Activated naive CD4-positive, alpha-beta T cell treated with anti-CD3 and anti-CD28 coated beads for 36 hours (primary cell): ENCODE measurements at regions of chr1 and their contacts with region 1.

Region 1: DNA sequence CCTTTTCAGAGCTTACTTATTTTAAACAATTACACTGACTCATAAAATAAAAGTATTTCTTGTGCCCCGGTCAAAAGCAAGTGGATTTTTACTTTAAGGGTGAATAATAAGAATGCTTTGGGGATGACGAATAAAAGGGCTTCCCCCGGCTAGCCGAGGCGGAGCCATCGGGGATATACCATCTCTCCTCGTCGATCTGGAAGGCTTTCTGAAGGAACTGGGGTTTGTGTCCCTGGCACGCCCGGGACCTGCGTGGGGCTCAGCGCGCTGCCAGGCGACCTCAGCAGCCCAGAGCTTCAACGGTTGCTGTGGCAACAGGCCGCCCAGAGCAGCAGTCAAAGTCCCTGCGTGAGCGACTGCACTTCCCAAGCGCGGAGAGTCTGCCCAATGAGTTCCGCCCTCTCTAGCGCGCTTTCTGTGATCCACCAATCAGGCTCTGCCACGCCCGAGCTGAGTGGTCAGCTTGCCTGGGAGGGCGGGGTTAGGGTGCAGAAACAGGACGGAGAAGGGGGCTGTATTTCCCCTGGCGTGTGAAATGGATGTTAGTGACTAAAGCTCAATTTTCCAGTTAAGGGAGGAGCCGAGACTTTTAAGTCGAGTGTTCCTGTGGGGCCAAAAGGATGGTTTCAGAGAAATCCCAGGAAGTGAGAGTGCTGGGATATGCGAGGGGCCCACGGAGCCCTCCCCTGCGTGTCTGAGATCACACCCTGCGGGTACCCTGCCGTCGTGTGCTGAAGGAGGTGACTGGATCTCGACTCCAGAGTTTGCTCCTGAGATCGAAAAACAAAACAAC is 33.0 kb upstream of the MGST3 start:
- DNase-seq: peak; percentile 98
- H3K4me3 Mint-ChIP-seq: peak overlapping the region; percentile 89
- H3K27ac Mint-ChIP-seq: peak overlapping the region; percentile 89
- H3K4me1 Mint-ChIP-seq: peaks cover 21% of the 10 kb centered on the region
- H3K27me3 Mint-ChIP-seq: peaks cover 19% of the 10 kb centered on the region

Region 2: GRCh38 chr1:165114022-165114888 is 483.8 kb before region 1 on chr1:
- CTCF ChIA-PET with region 1: no interaction called
- intact Hi-C with region 1: no loop called
- DNase-seq: peak; percentile 45
- H3K4me3 Mint-ChIP-seq: no peak overlapping the region
- H3K27ac Mint-ChIP-seq: no peak overlapping the region
- H3K4me1 Mint-ChIP-seq: no peaks in the 10 kb centered on the region
- H3K27me3 Mint-ChIP-seq: peaks cover 33% of the 10 kb centered on the region

Region 3: DNA sequence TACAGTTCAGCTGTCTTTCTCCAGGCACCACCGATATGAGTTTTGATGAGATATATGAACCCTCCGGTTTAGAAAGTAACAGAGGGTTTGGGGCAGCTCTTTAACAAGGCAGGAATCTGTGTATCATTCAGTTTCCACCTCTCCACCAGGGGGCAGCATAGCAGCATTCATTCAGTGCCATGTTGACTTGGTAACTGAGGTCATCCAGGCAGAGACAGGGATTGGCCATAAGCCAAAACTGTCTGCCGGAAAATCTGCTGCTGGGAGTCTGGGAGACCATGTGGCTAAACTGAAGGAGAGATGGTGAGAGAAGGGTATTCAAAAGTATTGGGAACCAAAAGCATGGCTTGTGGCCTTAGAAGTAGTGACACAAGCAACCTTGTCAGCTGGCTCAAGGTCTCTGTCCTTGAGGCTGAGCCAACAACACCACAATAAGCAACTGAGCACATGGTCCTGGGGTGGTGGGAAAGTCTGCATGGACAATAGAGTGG is 340.1 kb before region 1 on chr1:
- CTCF ChIA-PET with region 1: no interaction called
- intact Hi-C with region 1: loop called (anchors 5 kb)
- DNase-seq: peak; percentile 65
- H3K4me3 Mint-ChIP-seq: no peak overlapping the region
- H3K27ac Mint-ChIP-seq: no peak overlapping the region
- H3K4me1 Mint-ChIP-seq: no peaks in the 10 kb centered on the region
- H3K27me3 Mint-ChIP-seq: peaks cover 24% of the 10 kb centered on the region

Region 4: GRCh38 chr1:165403835-165404482 is 194.1 kb before region 1 on chr1:
- CTCF ChIA-PET with region 1: interaction called, 35 read pairs
- intact Hi-C with region 1: loop called (anchors 1 kb)
- DNase-seq: peak; percentile 57
- H3K4me3 Mint-ChIP-seq: no peak overlapping the region
- H3K27ac Mint-ChIP-seq: no peak overlapping the region
- H3K4me1 Mint-ChIP-seq: peaks cover 2% of the 10 kb centered on the region
- H3K27me3 Mint-ChIP-seq: peaks cover 17% of the 10 kb centered on the region

Region 5: DNA sequence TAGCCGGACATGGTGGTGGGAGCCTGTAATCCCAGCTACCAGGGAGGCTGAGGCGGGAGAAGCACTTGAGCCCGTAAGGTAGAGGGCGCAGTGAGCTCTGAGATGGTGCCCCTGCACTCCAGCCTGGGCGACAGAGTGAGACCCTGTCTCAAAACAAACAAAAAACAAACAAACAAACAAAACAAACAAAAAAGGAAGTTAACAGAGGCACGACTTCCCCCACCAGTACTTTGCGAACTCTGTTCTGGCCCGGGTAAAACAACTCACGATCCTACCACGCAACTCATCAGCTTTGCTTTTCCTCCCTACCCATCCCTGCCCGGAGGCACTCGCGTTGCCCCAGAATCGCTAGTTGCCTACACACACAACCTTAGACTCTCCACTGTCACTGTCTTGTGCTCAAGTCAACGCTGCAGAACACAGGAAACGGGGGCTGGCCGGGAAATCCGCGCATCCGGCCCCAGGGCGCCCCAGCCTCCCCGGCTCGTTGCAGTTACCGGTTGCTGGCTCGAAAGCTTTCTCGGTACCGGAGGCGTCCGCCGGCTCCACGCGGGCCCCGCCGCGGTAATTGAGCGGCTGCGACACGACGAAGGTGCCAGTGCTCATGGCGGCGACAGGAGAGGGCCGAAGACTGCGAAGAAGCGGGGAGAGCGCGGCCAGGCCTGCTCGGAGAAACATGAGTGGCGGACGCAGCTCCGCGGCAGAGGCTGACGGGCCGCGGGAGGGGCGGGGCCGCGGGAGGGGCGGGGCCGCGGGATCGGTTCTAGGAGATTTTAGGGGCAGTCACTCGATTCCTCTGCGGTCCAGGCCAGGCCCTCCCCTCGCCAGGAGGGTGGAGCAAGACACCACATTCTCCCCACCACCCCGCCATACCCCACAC is 100.0 kb after region 1 on chr1 and contains the start of gene ALDH9A1:
- CTCF ChIA-PET with region 1: interaction called, 8 read pairs
- intact Hi-C with region 1: loop called (anchors 1 kb)
- DNase-seq: peak; percentile 89
- H3K4me3 Mint-ChIP-seq: peak within 1 kb of the TSS; percentile 97
- H3K27ac Mint-ChIP-seq: peak within 1 kb of the TSS; percentile 96
- H3K4me1 Mint-ChIP-seq: peaks cover 26% of the 10 kb centered on the region
- H3K27me3 Mint-ChIP-seq: no peaks in the 10 kb centered on the region
- total RNA-seq, gene ALDH9A1: 35.8 to 43.5 TPM

Region 6: GRCh38 chr1:165827268-165828102 is 229.4 kb after region 1 on chr1 and contains the start of gene UCK2:
- CTCF ChIA-PET with region 1: interaction called, 8 read pairs
- intact Hi-C with region 1: loop called (anchors 1 kb)
- DNase-seq: peak; percentile 62
- H3K4me3 Mint-ChIP-seq: peak within 1 kb of the TSS; percentile 93
- H3K27ac Mint-ChIP-seq: peak within 1 kb of the TSS; percentile 88
- H3K4me1 Mint-ChIP-seq: peaks cover 13% of the 10 kb centered on the region
- H3K27me3 Mint-ChIP-seq: peaks cover 3% of the 10 kb centered on the region
- total RNA-seq, gene UCK2: 58.8 to 61.5 TPM

Region 7: DNA sequence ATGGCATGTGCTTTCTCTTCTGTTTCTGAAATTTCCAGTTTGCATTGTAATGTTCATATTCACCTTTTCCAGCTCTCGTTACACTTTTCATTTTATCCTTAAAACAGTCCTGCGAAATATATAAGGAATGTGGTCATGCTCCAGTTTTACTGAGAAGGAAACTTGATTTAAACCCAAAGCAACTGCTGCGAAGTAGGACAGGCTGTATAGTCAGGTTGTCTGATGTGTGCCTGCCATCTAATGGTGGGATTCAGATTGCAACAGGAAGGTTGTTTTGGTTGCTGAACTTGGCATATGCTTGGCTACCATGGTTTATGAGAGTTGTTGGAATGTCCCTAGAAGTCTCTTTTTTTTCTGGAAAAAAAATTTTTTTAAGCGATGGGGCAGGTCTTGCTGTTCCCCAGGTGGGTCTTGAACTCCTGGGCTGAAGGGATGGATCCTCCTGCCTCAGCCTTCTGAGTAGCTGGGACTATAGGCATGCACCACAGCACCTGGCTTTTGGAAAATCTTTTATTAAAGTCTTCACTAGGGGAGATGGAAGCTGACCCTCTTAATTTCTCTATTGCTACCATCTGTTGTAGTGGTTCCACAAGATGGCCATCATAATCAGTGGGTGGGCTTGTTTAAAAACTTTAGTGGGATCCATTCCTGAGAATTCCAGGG is 316.2 kb after region 1 on chr1:
- CTCF ChIA-PET with region 1: interaction called, 58 read pairs
- intact Hi-C with region 1: loop called (anchors 1 kb)
- DNase-seq: peak; percentile 82
- H3K4me3 Mint-ChIP-seq: no peak overlapping the region
- H3K27ac Mint-ChIP-seq: no peak overlapping the region
- H3K4me1 Mint-ChIP-seq: no peaks in the 10 kb centered on the region
- H3K27me3 Mint-ChIP-seq: no peaks in the 10 kb centered on the region